ENCODE measurements at regions of chr3 and their contacts with region 1.

Region 1: DNA sequence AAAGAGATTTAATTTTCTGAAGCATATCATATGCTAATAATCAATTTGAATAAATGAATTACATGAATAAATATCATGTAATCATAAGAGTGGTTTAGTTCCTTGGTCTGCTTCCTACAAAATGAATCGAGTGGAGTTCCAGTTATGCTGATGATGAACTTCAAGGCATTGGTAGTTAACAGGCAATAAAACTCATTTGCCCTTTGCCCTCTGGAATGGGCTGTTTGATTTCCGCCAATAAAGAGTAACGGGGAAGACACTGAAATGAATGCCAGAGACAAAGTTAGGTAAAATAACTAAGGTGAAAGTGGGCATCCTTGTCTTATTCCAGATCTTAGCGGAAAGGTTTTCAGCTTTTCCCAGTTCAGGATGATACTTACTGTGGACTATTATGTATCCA is 90.1 kb downstream of the C3orf38 start:
- DNase-seq: no peak
- H3K4me3 ChIP-seq: no peak overlapping the region
- H3K27ac ChIP-seq: no peak overlapping the region
- H3K4me1 ChIP-seq: no peaks in the 10 kb centered on the region
- H3K27me3 ChIP-seq: no peaks in the 10 kb centered on the region
- CTCF ChIP-seq: no peak
- EP300 ChIP-seq: no peak
- POLR2A ChIP-seq: no peak

Region 2: DNA sequence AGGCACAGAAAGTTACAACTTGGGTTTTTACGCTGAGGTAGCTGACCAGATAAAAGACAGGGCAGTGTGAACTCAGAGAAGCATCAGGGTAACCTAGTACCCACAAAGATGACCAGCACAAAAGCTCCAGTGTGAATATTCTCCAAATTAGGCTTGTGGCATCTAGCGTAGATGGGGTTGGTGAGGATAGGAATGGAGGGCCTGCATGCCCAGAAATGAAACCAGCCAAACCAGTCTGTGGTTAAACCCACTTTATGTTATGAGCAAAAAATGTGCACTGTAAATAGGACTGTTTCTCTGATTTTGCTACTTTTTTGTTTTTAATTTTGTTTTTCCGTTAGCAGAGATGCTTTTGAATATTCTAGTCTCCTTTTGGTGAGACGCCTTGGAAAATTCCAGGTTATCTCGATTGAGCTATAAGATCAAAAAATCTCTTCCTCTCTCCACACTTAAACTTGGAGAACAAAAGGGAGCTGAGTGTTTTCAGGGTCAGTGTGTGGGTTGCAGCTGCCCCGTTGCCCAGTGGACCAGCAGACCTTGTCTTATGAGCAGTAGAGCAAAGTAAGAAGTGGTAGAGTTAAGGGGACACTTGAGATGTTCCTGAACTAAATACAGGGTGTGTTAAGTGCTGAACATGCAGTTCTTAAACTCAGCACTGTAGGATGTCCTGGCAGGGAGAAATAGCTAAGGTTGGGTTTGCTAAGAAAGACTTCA is 42.8 kb after region 1 on chr3:
- in situ Hi-C with region 1: no loop called
- intact Hi-C with region 1: loop called (anchors 2 kb)
- DNase-seq: no peak
- H3K4me3 ChIP-seq: no peak overlapping the region
- H3K27ac ChIP-seq: no peak overlapping the region
- H3K4me1 ChIP-seq: peaks cover 0 to 5% (median 0%) of the 10 kb centered on the region in 4 donors
- H3K27me3 ChIP-seq: no peaks in the 10 kb centered on the region
- CTCF ChIP-seq: no peak
- EP300 ChIP-seq: no peak
- POLR2A ChIP-seq: no peak

Region 3: GRCh38 chr3:88385090-88385489 is 145.2 kb after region 1 on chr3:
- in situ Hi-C with region 1: no loop called
- intact Hi-C with region 1: no loop called
- DNase-seq: no peak
- H3K4me3 ChIP-seq: no peak overlapping the region
- H3K27ac ChIP-seq: no peak overlapping the region
- H3K4me1 ChIP-seq: no peaks in the 10 kb centered on the region
- H3K27me3 ChIP-seq: no peaks in the 10 kb centered on the region
- CTCF ChIP-seq: no peak
- EP300 ChIP-seq: no peak
- POLR2A ChIP-seq: no peak

Measured in transverse colon (tissue), 4 donors.